ENCODE measurements at regions of chr4 and their contacts with region 1.

Region 1: GRCh38 chr4:169225058-169225751 is 45.6 kb downstream of the SH3RF1 start:
- DNase-seq: no peak
- H3K4me3 Mint-ChIP-seq: no peak overlapping the region
- H3K27ac Mint-ChIP-seq: no peak overlapping the region
- H3K4me1 Mint-ChIP-seq: peaks cover 3% of the 10 kb centered on the region
- H3K27me3 Mint-ChIP-seq: no peaks in the 10 kb centered on the region

Region 2: DNA sequence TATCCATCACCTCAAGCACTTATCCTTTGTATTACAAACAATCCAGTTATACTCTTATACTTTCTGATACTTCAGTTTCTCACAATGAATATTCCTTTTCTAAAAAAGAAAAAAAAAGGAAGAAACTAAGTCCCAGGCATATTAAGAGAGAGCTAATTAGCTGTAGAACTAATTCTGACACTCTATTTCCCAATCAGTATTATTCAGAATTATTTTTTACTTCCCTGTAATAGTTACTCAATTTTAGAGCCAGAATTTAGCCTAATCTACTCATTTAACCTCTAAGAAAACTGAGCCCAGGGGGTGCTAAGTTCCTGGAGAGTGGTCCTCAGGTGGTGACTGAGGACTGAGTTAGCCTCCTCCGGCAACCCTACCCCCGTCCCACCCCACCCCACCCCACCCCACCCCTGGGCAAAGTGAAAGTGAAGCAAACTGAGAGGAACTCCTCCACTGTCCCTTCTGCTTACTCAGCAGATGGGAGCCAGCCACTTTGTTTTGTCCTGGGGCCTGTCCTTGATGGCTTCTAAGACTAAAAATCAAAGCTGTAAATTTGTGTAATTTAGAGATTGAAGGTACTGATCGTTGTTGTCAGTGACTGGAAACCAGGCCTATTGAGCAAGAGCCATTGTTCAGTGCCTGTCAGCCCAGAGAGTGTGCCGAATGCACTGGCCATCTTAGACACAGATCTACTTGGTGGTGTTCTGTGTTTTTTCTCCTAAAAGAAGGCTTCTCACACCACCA is 377.3 kb before region 1 on chr4:
- intact Hi-C with region 1: no loop called
- DNase-seq: no peak
- H3K4me3 Mint-ChIP-seq: no peak overlapping the region
- H3K27ac Mint-ChIP-seq: no peak overlapping the region
- H3K4me1 Mint-ChIP-seq: peaks cover 18% of the 10 kb centered on the region
- H3K27me3 Mint-ChIP-seq: peaks cover 9% of the 10 kb centered on the region

Region 3: DNA sequence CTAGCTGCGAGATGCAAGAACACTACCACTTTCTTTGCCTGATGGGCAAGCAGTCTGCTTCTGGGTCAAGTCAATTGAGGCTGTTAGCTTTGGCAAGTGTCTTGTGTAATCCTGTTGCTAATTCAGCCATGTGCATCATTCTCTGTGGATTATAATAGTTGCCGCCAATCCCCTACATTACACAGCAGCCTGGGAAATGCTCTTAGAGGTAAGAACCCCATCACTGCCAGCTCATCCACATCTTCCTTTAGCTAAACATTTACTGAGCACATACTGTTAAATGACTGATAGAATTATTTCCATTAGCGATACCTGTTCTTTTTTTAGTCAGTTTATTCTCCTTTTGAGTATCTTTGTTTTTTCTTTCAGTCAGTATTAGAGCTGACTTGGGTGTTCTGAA is 331.4 kb before region 1 on chr4:
- intact Hi-C with region 1: no loop called
- DNase-seq: no peak
- H3K4me3 Mint-ChIP-seq: no peak overlapping the region
- H3K27ac Mint-ChIP-seq: no peak overlapping the region
- H3K4me1 Mint-ChIP-seq: no peaks in the 10 kb centered on the region
- H3K27me3 Mint-ChIP-seq: no peaks in the 10 kb centered on the region

Region 4: GRCh38 chr4:169079942-169080827 is 145.0 kb before region 1 on chr4:
- intact Hi-C with region 1: loop called (anchors 5 kb)
- DNase-seq: no peak
- H3K4me3 Mint-ChIP-seq: peak overlapping the region; percentile 7
- H3K27ac Mint-ChIP-seq: no peak overlapping the region
- H3K4me1 Mint-ChIP-seq: peaks cover 14% of the 10 kb centered on the region
- H3K27me3 Mint-ChIP-seq: peaks cover 5% of the 10 kb centered on the region

Region 5: DNA sequence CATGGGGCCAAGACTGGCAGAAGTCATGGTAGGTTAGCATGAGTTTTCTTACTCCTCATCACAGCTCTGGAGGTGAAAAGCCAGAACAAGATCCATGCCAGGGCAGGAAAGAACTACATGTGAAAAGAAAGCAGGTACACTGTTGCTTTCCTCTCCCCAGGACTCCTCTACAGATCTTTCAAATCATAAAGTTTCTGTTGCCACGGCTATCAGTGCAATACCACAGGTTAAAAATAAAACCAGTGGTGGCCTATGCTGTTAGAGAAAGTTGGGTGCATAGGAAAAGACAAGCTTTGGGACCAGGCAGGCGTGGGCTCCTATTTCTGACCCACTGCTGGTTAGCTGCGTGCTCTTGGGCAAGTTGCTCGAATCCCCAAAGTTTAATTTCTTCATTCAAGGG is 35.8 kb before region 1 on chr4:
- intact Hi-C with region 1: no loop called
- DNase-seq: no peak
- H3K4me3 Mint-ChIP-seq: no peak overlapping the region
- H3K27ac Mint-ChIP-seq: no peak overlapping the region
- H3K4me1 Mint-ChIP-seq: no peaks in the 10 kb centered on the region
- H3K27me3 Mint-ChIP-seq: no peaks in the 10 kb centered on the region

Region 6: GRCh38 chr4:169270810-169271691 is 45.8 kb after region 1 on chr4 and contains the start of gene SH3RF1:
- intact Hi-C with region 1: loop called (anchors 1 kb)
- DNase-seq: peak; percentile 13
- H3K4me3 Mint-ChIP-seq: peak within 1 kb of the TSS; percentile 75
- H3K27ac Mint-ChIP-seq: no peak within 1 kb of the TSS
- H3K4me1 Mint-ChIP-seq: peaks cover 9% of the 10 kb centered on the region
- H3K27me3 Mint-ChIP-seq: peaks cover 61% of the 10 kb centered on the region
- total RNA-seq, gene SH3RF1: 1.1 and 1.4 TPM in 2 replicates

Measured in activated T-helper 2 cell treated with anti-CD3 and anti-CD28 coated beads, Interferon-gamma antibody, Interleukin-2, Interleukin-4, amounts not matched to agents 10 μg/mL and 5 μg/mL and 100 μg/mL, durations not matched to agents 14 hours and 24 hours and 36 hours (primary cell).